Right ventricle myocardium inferior (tissue), 1 donor: ENCODE measurements at regions of chr10 and their contacts with region 1.

Region 1: DNA sequence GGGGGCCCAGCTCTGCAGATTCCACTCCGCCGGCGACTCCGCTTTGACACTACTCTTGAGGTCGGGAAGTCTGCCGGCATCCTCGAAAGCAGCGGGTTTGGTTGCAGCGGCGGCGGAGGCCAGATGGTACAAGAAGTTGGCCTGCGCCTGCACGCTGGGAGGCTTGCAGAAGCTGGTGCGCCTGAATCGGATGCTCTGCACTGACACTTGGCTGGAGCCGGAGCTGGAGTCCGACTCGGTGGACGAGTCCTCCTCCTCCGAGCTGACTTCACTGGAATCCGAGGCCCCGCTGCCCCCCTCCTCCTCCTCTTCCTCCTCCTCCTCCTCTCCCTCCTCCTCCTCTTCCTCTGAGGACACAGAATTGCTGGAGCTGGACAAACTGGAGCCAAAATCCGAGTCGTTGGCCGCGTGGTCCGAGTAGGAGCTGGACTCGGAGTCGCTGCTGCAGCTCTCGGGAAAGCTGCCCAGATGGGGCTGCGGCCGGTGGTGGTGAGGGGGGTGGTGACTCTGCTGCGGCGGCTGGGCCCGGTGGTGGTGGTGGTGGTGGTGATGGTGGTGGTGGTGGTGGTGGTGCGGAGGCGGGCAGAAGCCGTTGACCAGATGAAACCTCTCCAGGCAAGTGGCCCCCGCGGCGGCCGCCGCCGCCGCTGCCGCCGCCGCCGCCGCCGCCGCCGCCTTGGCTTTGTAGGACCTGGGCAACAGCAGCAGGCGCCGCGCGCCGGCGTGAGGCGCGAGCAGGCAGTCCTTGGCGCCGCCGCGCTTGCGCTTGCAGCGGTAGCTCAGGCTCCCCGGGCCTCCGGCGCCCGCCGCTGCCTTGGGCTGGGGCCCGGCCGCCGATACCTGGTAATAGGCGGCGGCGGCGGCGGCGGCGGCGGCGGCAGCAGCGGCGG is 9.0 kb downstream of the SKIDA1 start:
- DNase-seq: peak; percentile 87
- ATAC-seq: peak; percentile 47

Region 2: DNA sequence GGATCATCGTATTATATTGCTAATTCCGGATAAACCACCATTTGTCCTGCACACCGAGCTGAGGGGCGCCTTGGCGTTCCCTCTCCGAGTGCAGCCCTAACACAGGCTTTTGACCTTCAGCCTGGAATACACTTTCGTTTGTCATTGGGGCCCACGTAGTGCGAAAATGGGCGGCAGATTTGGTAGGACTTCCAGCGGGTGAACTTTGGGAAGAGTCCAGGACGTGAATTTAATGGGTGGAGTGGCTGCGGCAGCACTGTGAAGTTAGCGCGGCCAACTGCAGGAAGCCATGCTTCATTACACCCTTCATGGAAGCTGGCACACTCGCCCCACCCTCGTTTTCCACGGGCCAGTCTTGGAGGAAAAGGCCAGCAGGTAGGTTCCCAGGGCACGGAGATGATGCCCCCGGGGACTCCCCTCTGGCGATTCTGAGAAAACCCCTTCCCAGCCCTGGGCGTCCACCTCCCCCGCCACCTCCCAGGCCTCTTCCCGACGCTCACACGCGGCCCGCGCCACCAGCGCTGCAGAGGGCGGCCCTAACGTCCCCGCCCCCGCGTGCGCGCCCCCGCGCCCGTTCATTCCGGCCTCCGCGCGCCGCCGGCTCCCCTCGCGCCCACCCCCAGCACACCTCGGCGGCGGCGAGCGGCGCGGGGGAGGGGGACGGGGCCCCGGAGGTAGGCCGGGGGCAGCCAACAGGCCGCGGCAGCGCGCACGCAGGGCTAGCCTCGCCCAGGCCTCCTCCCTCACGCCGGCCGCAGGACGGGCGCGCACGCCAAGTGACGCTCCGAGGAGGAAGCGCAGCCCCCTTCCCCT is 17.2 kb after region 1 on chr10 and contains the start of gene MLLT10:
- intact Hi-C with region 1: loop called (anchors 1 kb)
- DNase-seq: peak; percentile 97
- ATAC-seq: peak; percentile 97
- total RNA-seq, gene MLLT10: 18.3 TPM

Region 3: GRCh38 chr10:21732067-21732772 is 215.7 kb after region 1 on chr10:
- intact Hi-C with region 1: loop called (anchors 5 kb)
- DNase-seq: peak; percentile 78
- ATAC-seq: peak; percentile 89